WTC11 (cell line): ENCODE measurements at regions of chr2 and their contacts with region 1.

Region 1: GRCh38 chr2:102251042-102251848 is 60.1 kb upstream of the IL1RL1 start:
- DNase-seq: peak; percentile 80
- ATAC-seq: peak; percentile 93
- H3K4me3 Mint-ChIP-seq: peak overlapping the region; percentile 82
- H3K27ac Mint-ChIP-seq: no peak overlapping the region
- H3K4me1 Mint-ChIP-seq: peaks cover 3% of the 10 kb centered on the region; the same call in 1 of the 2 replicates
- H3K27me3 Mint-ChIP-seq: peaks cover 34% of the 10 kb centered on the region
- CTCF ChIP-seq: peak; percentile 77

Region 2: GRCh38 chr2:102187496-102188150 is 63.6 kb before region 1 on chr2:
- CTCF ChIA-PET with region 1: interaction called, 13 read pairs
- POLR2A ChIA-PET with region 1: no interaction called
- DNase-seq: peak; percentile 58
- ATAC-seq: peak; percentile 85
- H3K4me3 Mint-ChIP-seq: peak overlapping the region; percentile 71
- H3K27ac Mint-ChIP-seq: no peak overlapping the region
- H3K4me1 Mint-ChIP-seq: peaks cover 3% of the 10 kb centered on the region; the same call in 1 of the 2 replicates
- H3K27me3 Mint-ChIP-seq: peaks cover 48% of the 10 kb centered on the region
- CTCF ChIP-seq: no peak

Region 3: GRCh38 chr2:102226612-102227391 is 24.4 kb before region 1 on chr2:
- CTCF ChIA-PET with region 1: no interaction called
- POLR2A ChIA-PET with region 1: no interaction called
- DNase-seq: no peak
- ATAC-seq: no peak
- H3K4me3 Mint-ChIP-seq: no peak overlapping the region
- H3K27ac Mint-ChIP-seq: no peak overlapping the region
- H3K4me1 Mint-ChIP-seq: peaks cover 16% of the 10 kb centered on the region
- H3K27me3 Mint-ChIP-seq: no peaks in the 10 kb centered on the region; the same call in 1 of the 2 replicates
- CTCF ChIP-seq: no peak

Region 4: GRCh38 chr2:102266204-102266603 is 15.0 kb after region 1 on chr2:
- CTCF ChIA-PET with region 1: interaction called, 11 read pairs
- POLR2A ChIA-PET with region 1: no interaction called
- DNase-seq: no peak
- ATAC-seq: no peak
- H3K4me3 Mint-ChIP-seq: no peak overlapping the region
- H3K27ac Mint-ChIP-seq: no peak overlapping the region
- H3K4me1 Mint-ChIP-seq: peaks cover 5% of the 10 kb centered on the region
- H3K27me3 Mint-ChIP-seq: peaks cover 3% of the 10 kb centered on the region; the same call in 1 of the 2 replicates
- CTCF ChIP-seq: no peak

Region 5: GRCh38 chr2:102355526-102356380 is 104.5 kb after region 1 on chr2 and contains the start of gene IL18R1:
- CTCF ChIA-PET with region 1: interaction called, 14 read pairs
- POLR2A ChIA-PET with region 1: no interaction called
- DNase-seq: peak; percentile 79
- ATAC-seq: peak; percentile 97
- H3K4me3 Mint-ChIP-seq: peak within 1 kb of the TSS; percentile 83
- H3K27ac Mint-ChIP-seq: no peak within 1 kb of the TSS
- H3K4me1 Mint-ChIP-seq: peaks cover 3% of the 10 kb centered on the region; the same call in 1 of the 2 replicates
- H3K27me3 Mint-ChIP-seq: peaks cover 32% of the 10 kb centered on the region
- CTCF ChIP-seq: peak; percentile 59; the same call in 1 of the 2 replicates
- total RNA-seq, gene IL18R1: 0.25 to 0.46 TPM in 2 of 3 replicates, not detected in the other

Region 6: DNA sequence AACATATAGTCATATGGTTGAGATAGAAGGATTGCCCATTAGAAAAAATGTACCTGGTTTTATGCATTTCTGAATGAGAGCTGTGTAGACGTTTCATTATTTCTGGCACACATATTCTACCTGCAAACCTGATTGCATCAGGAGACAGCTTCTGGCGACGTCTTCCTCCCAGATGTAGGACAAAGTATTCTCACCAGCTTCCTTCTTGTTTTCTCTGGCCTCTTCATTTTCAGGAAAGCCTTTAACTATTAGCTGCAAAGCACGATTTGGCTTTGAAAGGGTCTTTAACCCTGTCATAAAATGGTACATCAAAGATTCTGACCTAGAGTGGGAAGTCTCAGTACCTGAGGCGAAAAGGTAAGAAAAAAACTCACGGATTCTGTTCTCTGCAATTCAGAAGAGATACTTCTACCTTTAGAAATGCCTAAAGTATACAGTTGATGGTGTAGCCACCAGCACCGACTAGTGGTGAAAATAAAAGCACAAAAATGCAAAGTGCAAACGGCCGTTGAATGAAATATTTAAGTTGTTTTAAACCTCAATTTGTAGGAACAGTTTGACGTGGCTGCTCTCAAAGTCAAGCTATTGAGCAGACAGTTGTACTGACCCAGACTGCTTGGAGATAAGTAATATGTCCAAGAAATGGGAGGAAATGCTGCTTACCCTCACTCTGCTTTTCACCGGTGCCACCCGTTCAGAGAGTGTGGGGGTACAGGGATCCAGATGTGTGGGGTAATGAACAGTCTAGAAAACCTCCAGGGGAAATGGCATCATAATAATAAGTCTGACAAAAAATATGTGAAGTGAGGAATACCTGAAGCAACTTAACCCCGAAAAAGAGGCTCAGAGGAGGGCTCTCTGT is 192.0 kb after region 1 on chr2:
- CTCF ChIA-PET with region 1: interaction called, 15 read pairs
- POLR2A ChIA-PET with region 1: no interaction called
- DNase-seq: peak; percentile 15
- ATAC-seq: peak; percentile 72
- H3K4me3 Mint-ChIP-seq: no peak overlapping the region
- H3K27ac Mint-ChIP-seq: no peak overlapping the region
- H3K4me1 Mint-ChIP-seq: no peaks in the 10 kb centered on the region
- H3K27me3 Mint-ChIP-seq: no peaks in the 10 kb centered on the region
- CTCF ChIP-seq: 0 out of 2 replicates have a peak, but pooled peaks have one; percentile 22